SK-N-SH (cell line): ENCODE measurements at regions of chr7 and their contacts with region 1.

Region 1: DNA sequence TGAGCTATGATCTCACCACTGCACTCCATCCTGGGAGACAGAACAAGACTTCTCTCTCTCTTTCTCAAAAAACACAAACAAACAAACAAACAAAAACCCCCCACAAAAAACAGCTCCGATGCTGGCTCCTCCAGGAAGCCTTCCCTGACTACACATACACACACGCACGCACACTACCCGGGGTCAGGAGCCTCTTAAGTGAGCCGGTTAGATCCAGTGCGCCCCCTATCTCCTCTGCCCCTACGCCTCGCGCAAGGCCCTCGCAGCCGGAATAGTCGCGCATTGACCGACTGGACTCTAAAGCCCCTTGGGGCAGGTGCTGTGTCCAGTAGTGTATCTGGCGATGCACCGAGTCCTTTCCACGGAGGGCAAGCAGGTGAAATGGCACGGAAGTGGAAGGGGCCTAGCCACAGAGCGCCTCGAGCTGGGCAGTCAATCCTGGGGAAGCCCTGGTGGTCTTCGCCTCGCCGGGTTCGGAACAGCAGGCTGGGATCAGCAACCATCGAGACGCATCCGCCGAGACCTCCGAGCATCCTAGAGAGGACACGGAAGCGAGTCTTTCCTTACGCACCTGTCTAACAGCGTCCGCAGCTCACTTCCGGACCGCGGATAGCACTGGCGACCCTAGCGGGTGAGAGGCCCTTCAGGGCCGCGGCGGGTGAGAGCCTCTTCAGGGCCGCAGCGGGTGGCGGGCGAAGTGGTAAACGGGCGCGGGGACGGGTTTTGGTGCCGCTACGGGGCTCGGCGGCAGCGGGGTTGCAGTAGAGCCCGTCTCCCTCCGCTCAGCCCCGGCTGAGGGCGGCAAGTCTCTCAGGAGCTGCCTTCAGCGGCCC is at the start of gene ZSCAN25:
- DNase-seq: peak; percentile 97
- H3K4me3 ChIP-seq: peak within 1 kb of the TSS; percentile 84 to 98
- H3K27ac ChIP-seq: peak within 1 kb of the TSS; percentile 62 to 91
- H3K4me1 ChIP-seq: peaks cover 7 to 8% of the 10 kb centered on the region in 2 experiments; a peak in 3 of 4 replicates
- H3K27me3 ChIP-seq: no peaks in the 10 kb centered on the region
- CTCF ChIP-seq: peak; percentile 68
- EP300 ChIP-seq: no peak
- RAD21 ChIP-seq: peak; percentile 62
- polyA plus RNA-seq, gene ZSCAN25: 14.9 and 18.7 TPM in 2 replicates

Region 2: GRCh38 chr7:99504603-99505323 is 111.8 kb before region 1 on chr7 and contains the start of gene ZKSCAN5:
- CTCF ChIA-PET with region 1: interaction called, 4 read pairs
- POLR2A ChIA-PET with region 1: interaction called, 15 read pairs
- DNase-seq: peak; percentile 95
- H3K4me3 ChIP-seq: peak within 1 kb of the TSS; percentile 62 to 98
- H3K27ac ChIP-seq: peak within 1 kb of the TSS; percentile 89 to 91
- H3K4me1 ChIP-seq: peaks cover 4 to 10% of the 10 kb centered on the region in 2 experiments; a peak in 2 of 4 replicates
- H3K27me3 ChIP-seq: no peaks in the 10 kb centered on the region
- CTCF ChIP-seq: no peak
- EP300 ChIP-seq: no peak
- RAD21 ChIP-seq: no peak
- polyA plus RNA-seq, gene ZKSCAN5: 7.5 and 9.1 TPM in 2 replicates

Region 3: DNA sequence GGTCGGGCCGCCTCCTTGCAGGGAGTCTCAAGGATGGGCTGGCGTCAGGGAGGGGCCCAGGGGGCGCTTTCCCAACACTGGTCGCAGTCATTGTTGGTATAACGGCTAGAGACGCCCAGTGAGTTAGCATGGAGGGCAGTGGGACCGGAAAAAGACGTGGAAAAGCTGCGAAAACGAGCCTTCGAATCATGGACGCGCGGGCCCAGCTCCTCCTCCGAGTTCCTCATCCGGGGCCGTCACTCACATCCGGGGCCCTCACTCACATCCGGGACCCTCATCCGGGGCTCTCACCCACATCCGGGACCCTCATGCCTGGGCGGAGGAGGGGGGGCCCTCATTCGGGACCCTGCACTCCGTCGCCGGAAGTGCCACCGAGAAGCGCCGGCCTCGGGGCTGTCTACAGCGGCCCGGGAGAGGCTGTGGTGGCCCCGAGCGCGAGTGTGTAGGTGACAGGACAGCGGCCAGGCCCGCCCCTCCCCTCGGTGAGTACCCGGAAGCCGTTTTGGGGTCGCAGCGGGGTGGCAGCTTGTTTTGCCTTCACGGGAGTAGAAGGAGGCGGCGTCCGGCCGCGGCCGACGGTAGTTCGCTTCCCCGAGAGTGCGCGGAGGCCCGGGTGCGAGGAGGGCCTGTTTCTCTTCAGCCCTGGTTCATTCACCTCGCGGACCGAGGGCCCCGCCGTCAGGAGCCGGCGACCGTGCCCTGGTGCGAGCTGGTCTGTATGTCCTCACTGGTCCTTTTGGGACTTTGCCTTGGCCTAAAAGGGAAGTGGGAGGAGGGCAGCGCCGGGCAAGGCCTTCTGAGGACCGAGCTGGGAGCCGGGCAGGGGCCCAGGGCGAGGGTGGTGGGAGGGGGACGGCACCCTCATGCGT is 58.0 kb before region 1 on chr7 and contains the start of gene ZNF655:
- CTCF ChIA-PET with region 1: interaction called, 13 read pairs
- POLR2A ChIA-PET with region 1: interaction called, 18 read pairs
- DNase-seq: peak; percentile 100
- H3K4me3 ChIP-seq: peak within 1 kb of the TSS; percentile 88 to 98
- H3K27ac ChIP-seq: peak within 1 kb of the TSS; percentile 97 to 99
- H3K4me1 ChIP-seq: peaks cover 20 to 34% of the 10 kb centered on the region in 2 experiments
- H3K27me3 ChIP-seq: no peaks in the 10 kb centered on the region
- CTCF ChIP-seq: no peak
- EP300 ChIP-seq: peak; percentile 17 to 65; a peak in 2 of 4 replicates
- RAD21 ChIP-seq: no peak
- polyA plus RNA-seq, gene ZNF655: 113 and 144 TPM in 2 replicates

Region 4: GRCh38 chr7:99571768-99572167 is 44.8 kb before region 1 on chr7:
- CTCF ChIA-PET with region 1: interaction called, 13 read pairs
- POLR2A ChIA-PET with region 1: no interaction called
- DNase-seq: no peak
- H3K4me3 ChIP-seq: no peak overlapping the region
- H3K27ac ChIP-seq: no peak overlapping the region
- H3K4me1 ChIP-seq: no peaks in the 10 kb centered on the region
- H3K27me3 ChIP-seq: no peaks in the 10 kb centered on the region
- CTCF ChIP-seq: no peak
- EP300 ChIP-seq: no peak
- RAD21 ChIP-seq: no peak

Region 5: DNA sequence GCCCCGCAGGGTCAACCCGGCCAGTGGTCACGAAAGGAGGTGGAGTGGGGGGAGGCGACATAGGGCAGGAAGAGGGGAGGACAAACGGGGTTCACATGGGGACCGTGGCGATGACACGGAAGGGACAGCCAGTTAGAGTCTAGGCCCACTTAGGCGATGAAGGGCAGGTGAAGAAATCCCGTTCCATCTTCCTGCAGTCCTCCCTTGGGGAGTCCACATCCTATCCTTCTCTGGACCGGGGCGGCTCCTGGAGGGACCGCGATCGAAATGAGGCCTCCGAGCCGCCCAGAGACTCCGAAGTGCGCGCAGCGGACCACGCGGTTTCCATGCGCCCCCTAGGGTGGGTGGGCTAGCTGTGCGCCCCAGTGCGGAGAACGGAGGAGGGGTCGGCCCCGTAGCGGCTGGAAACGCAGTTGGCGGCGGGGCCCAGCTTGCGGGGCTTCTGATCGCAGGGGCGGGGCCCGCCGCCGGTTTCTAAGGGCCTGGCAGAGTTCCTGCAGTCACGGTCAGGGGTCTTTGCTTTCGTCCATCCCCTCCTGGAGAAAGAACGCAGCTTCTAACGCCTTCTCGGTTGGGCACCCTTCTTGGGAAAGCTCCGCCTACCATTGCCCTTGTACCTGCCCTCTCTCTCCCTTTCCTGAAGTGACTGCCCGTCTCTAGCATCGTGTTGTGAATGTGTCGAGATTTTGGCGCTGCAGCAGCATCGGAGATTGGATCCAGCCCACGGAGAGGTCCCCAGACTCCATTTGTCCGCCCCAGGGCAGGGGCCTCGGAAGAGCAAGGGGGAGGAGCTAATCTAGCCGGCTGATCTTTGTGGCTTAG is 36.4 kb before region 1 on chr7:
- CTCF ChIA-PET with region 1: interaction called, 13 read pairs
- POLR2A ChIA-PET with region 1: interaction called, 10 read pairs
- DNase-seq: peak; percentile 91
- H3K4me3 ChIP-seq: peak overlapping the region; percentile 58 to 70
- H3K27ac ChIP-seq: peak overlapping the region in 1 of 2 experiments; percentile 71; a peak in 2 of 4 replicates
- H3K4me1 ChIP-seq: peaks cover 4 to 11% of the 10 kb centered on the region in 2 experiments; a peak in 2 of 4 replicates
- H3K27me3 ChIP-seq: no peaks in the 10 kb centered on the region
- CTCF ChIP-seq: peak; percentile 62
- EP300 ChIP-seq: no peak
- RAD21 ChIP-seq: peak; percentile 64

Region 6: GRCh38 chr7:99631295-99632109 is 14.9 kb after region 1 on chr7:
- CTCF ChIA-PET with region 1: interaction called, 6 read pairs
- POLR2A ChIA-PET with region 1: interaction called, 13 read pairs
- DNase-seq: no peak
- H3K4me3 ChIP-seq: no peak overlapping the region
- H3K27ac ChIP-seq: no peak overlapping the region
- H3K4me1 ChIP-seq: no peaks in the 10 kb centered on the region
- H3K27me3 ChIP-seq: no peaks in the 10 kb centered on the region
- CTCF ChIP-seq: peak; percentile 28; the same call in 1 of the 2 replicates
- EP300 ChIP-seq: no peak
- RAD21 ChIP-seq: peak; percentile 24